ENCODE measurements at regions of chr5 and their contacts with region 1.

Region 1: GRCh38 chr5:96807075-96807654 is 580 bp downstream of the ERAP1 start:
- DNase-seq: no peak
- H3K4me3 ChIP-seq: peak overlapping the region; percentile 48 to 68
- H3K4me3 Mint-ChIP-seq: peak overlapping the region; percentile 92 to 100 (median 98)
- H3K27ac ChIP-seq: peak overlapping the region; percentile 86
- H3K27ac Mint-ChIP-seq: peak overlapping the region; percentile 95 to 100 (median 99)
- H3K4me1 ChIP-seq: peaks cover 63% of the 10 kb centered on the region
- H3K4me1 Mint-ChIP-seq: peaks cover 44 to 79% (median 64%) of the 10 kb centered on the region in 4 donors
- H3K27me3 ChIP-seq: no peaks in the 10 kb centered on the region
- H3K27me3 Mint-ChIP-seq: peaks cover 0 to 3% of the 10 kb centered on the region in 2 donors

Region 2: GRCh38 chr5:96662725-96663513 is 144.2 kb before region 1 on chr5:
- CTCF ChIA-PET with region 1: no interaction called
- POLR2A ChIA-PET with region 1: interaction called, 25 read pairs
- intact Hi-C with region 1: loop called (anchors 5 kb)
- DNase-seq: peak; percentile 84 to 89 (median 86)
- H3K4me3 ChIP-seq: peak overlapping the region; percentile 59 to 89
- H3K4me3 Mint-ChIP-seq: peak overlapping the region; percentile 96 to 98 (median 97)
- H3K27ac ChIP-seq: peak overlapping the region; percentile 93
- H3K27ac Mint-ChIP-seq: peak overlapping the region; percentile 96 to 99 (median 98)
- H3K4me1 ChIP-seq: peaks cover 48% of the 10 kb centered on the region
- H3K4me1 Mint-ChIP-seq: peaks cover 36 to 69% (median 53%) of the 10 kb centered on the region in 4 donors
- H3K27me3 ChIP-seq: no peaks in the 10 kb centered on the region
- H3K27me3 Mint-ChIP-seq: no peaks in the 10 kb centered on the region

Region 3: GRCh38 chr5:96776621-96777020 is 30.5 kb before region 1 on chr5:
- CTCF ChIA-PET with region 1: interaction called, 5 read pairs
- POLR2A ChIA-PET with region 1: interaction called, 12 read pairs
- intact Hi-C with region 1: loop called (anchors 5 kb)
- DNase-seq: no peak
- H3K4me3 ChIP-seq: no peak overlapping the region
- H3K4me3 Mint-ChIP-seq: no peak overlapping the region
- H3K27ac ChIP-seq: no peak overlapping the region
- H3K27ac Mint-ChIP-seq: peak overlapping the region in 2 of 7 donors; percentile 28 to 81
- H3K4me1 ChIP-seq: peaks cover under 1% of the 10 kb centered on the region
- H3K4me1 Mint-ChIP-seq: peaks cover under 1 to 8% (median 4%) of the 10 kb centered on the region in 4 donors
- H3K27me3 ChIP-seq: no peaks in the 10 kb centered on the region
- H3K27me3 Mint-ChIP-seq: no peaks in the 10 kb centered on the region

Region 4: DNA sequence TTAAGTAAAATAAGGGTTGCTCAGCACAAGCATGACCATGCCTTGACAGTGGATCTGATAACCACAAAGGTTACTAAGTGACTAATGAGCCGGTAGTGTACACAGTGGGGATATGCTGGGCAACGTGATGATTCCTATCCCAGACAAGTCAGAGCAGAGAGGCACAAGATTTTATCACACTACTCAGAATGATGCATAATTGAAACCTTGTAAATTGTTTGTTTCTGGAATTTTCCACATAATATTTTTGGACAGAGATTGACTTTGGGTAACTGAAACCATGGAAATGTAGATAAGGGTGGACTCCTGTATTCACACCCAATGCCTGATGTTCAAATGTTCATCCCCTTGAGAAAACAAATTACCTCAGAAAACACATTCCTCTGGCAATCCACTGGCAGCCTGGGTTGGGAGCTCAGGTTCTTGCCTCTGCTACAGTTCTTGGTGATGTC is 16.8 kb after region 1 on chr5:
- CTCF ChIA-PET with region 1: interaction called, 74 read pairs
- POLR2A ChIA-PET with region 1: interaction called, 263 read pairs
- intact Hi-C with region 1: loop called (anchors 2 kb)
- DNase-seq: peak in 1 of 5 donors; percentile 35
- H3K4me3 ChIP-seq: no peak overlapping the region
- H3K4me3 Mint-ChIP-seq: peak overlapping the region in 1 of 8 donors; percentile 4
- H3K27ac ChIP-seq: no peak overlapping the region
- H3K27ac Mint-ChIP-seq: peak overlapping the region in 3 of 7 donors; percentile 14 to 83 (median 49)
- H3K4me1 ChIP-seq: peaks cover 28% of the 10 kb centered on the region
- H3K4me1 Mint-ChIP-seq: peaks cover 31 to 46% (median 38%) of the 10 kb centered on the region in 4 donors
- H3K27me3 ChIP-seq: no peaks in the 10 kb centered on the region
- H3K27me3 Mint-ChIP-seq: peaks cover 0 to 2% of the 10 kb centered on the region in 2 donors

Region 5: GRCh38 chr5:96855031-96855872 is 48.1 kb after region 1 on chr5:
- CTCF ChIA-PET with region 1: no interaction called
- POLR2A ChIA-PET with region 1: no interaction called
- intact Hi-C with region 1: no loop called
- DNase-seq: no peak
- H3K4me3 ChIP-seq: no peak overlapping the region
- H3K4me3 Mint-ChIP-seq: no peak overlapping the region
- H3K27ac ChIP-seq: no peak overlapping the region
- H3K27ac Mint-ChIP-seq: no peak overlapping the region
- H3K4me1 ChIP-seq: no peaks in the 10 kb centered on the region
- H3K4me1 Mint-ChIP-seq: no peaks in the 10 kb centered on the region
- H3K27me3 ChIP-seq: no peaks in the 10 kb centered on the region
- H3K27me3 Mint-ChIP-seq: peaks cover 0 to 2% of the 10 kb centered on the region in 2 donors

Region 6: GRCh38 chr5:96896806-96897205 is 89.6 kb after region 1 on chr5:
- CTCF ChIA-PET with region 1: interaction called, 3 read pairs
- POLR2A ChIA-PET with region 1: interaction called, 15 read pairs
- intact Hi-C with region 1: no loop called
- DNase-seq: no peak
- H3K4me3 ChIP-seq: no peak overlapping the region
- H3K4me3 Mint-ChIP-seq: peak overlapping the region; percentile 56 to 90 (median 80)
- H3K27ac ChIP-seq: peak overlapping the region; percentile 56
- H3K27ac Mint-ChIP-seq: peak overlapping the region; percentile 82 to 97 (median 92)
- H3K4me1 ChIP-seq: peaks cover 37% of the 10 kb centered on the region
- H3K4me1 Mint-ChIP-seq: peaks cover 26 to 55% (median 42%) of the 10 kb centered on the region in 4 donors
- H3K27me3 ChIP-seq: no peaks in the 10 kb centered on the region
- H3K27me3 Mint-ChIP-seq: no peaks in the 10 kb centered on the region

Region 7: GRCh38 chr5:98773464-98774191 is 1966.5 kb after region 1 on chr5 and contains the start of gene RGMB:
- CTCF ChIA-PET with region 1: no interaction called
- POLR2A ChIA-PET with region 1: interaction called, 3 read pairs
- intact Hi-C with region 1: loop called (anchors 5 kb)
- DNase-seq: peak; percentile 87 to 95 (median 89)
- H3K4me3 ChIP-seq: peak within 1 kb of the TSS; percentile 71 to 73
- H3K4me3 Mint-ChIP-seq: peak within 1 kb of the TSS; percentile 94 to 99 (median 98)
- H3K27ac ChIP-seq: peak within 1 kb of the TSS; percentile 59
- H3K27ac Mint-ChIP-seq: peak within 1 kb of the TSS; percentile 89 to 98 (median 94)
- H3K4me1 ChIP-seq: peaks cover 48% of the 10 kb centered on the region
- H3K4me1 Mint-ChIP-seq: peaks cover 34 to 70% (median 50%) of the 10 kb centered on the region in 4 donors
- H3K27me3 ChIP-seq: peaks cover 5% of the 10 kb centered on the region
- H3K27me3 Mint-ChIP-seq: peaks cover 2 to 3% of the 10 kb centered on the region in 2 donors
- total RNA-seq, gene RGMB: 16.5 to 17.0 TPM

Measured in CD4-positive, alpha-beta memory T cell (primary cell).